ENCODE measurements at regions of chr9 and their contacts with region 1.

Region 1: DNA sequence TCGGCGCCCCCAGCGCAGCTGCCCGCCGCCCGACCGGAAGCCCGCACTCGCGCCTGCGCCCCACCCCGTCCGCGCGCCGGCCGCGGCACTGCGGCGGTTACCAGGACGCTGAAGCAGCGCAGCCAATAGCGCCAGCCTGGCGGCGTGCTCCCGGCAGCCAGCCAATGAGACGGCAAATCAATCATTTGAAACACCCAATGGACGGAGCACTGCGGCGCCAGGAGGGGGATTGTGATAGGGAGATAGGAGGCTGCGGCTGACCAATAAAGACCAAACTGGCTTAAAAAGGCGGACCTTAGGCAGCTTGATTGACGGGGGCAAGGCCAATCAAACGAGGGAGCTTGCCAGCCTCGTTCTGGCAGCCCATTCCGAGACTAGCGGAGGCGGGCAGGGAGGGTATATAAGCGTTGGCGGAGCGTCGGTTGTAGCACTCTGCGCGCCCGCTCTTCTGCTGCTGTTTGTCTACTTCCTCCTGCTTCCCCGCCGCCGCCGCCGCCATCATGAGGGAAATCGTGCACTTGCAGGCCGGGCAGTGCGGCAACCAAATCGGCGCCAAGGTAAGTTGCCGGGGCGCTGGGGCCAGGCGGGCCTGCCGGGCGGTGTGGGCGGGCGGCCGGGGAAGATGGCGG is at the start of gene TUBB4B:
- DNase-seq: peak; percentile 98 to 100
- H3K4me3 ChIP-seq: peak within 1 kb of the TSS; percentile 97
- H3K27ac ChIP-seq: peak within 1 kb of the TSS; percentile 82
- H3K4me1 ChIP-seq: peaks cover 39% of the 10 kb centered on the region
- H3K27me3 ChIP-seq: no peaks in the 10 kb centered on the region
- CTCF ChIP-seq: no peak
- total RNA-seq, gene TUBB4B: 441 and 494 TPM in 2 replicates

Region 2: DNA sequence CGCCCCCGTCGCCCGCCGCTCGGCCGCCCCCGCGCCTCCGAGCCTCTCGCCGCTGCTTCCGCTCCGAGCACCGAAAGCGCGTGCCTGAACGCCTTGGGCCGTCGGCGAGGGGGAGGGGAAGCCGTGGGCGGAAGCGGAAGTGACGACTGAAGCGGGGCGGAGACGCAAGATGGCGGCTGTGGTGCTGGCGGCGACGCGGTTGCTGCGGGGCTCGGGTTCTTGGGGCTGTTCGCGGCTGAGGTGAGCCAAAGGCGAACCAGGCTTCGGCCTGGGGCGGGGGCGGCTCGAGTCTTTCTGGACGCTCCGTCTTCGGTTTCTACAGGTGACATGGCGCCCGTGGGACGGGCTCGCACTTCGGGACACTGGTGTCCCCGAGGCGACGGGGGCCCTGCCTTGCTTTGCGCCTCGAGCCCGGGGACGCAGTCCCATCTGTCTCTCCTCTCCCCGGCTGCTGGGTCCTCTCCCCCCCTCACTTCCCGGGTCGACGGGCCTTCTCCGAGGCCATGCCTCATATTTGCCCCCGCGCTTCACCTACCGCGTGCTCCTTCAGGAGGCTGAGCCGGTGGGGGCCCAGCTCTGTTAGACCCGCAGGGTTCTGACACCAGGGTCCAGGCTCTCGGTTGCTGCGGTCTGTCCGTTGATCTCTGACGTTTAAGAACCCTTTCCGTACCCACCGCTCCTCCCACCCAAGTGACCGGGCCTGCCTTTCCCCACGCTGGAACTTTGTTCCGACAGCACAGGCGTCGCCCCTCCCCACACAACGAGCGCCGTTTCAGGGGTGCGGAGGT is 830.3 kb before region 1 on chr9 and contains the starts of genes ENTR1 and PMPCA:
- CTCF ChIA-PET with region 1: no interaction called
- POLR2A ChIA-PET with region 1: no interaction called
- intact Hi-C with region 1: no loop called
- DNase-seq: peak; percentile 77 to 92
- H3K4me3 ChIP-seq: peak within 1 kb of the TSS; percentile 94
- H3K27ac ChIP-seq: peak within 1 kb of the TSS; percentile 51; the same call in 1 of the 2 replicates
- H3K4me1 ChIP-seq: peaks cover 17% of the 10 kb centered on the region; the same call in 1 of the 2 replicates
- H3K27me3 ChIP-seq: no peaks in the 10 kb centered on the region
- CTCF ChIP-seq: no peak
- total RNA-seq, gene ENTR1: 67.9 and 82.9 TPM in 2 replicates
- total RNA-seq, gene PMPCA: 78.1 and 86.5 TPM in 2 replicates

Region 3: DNA sequence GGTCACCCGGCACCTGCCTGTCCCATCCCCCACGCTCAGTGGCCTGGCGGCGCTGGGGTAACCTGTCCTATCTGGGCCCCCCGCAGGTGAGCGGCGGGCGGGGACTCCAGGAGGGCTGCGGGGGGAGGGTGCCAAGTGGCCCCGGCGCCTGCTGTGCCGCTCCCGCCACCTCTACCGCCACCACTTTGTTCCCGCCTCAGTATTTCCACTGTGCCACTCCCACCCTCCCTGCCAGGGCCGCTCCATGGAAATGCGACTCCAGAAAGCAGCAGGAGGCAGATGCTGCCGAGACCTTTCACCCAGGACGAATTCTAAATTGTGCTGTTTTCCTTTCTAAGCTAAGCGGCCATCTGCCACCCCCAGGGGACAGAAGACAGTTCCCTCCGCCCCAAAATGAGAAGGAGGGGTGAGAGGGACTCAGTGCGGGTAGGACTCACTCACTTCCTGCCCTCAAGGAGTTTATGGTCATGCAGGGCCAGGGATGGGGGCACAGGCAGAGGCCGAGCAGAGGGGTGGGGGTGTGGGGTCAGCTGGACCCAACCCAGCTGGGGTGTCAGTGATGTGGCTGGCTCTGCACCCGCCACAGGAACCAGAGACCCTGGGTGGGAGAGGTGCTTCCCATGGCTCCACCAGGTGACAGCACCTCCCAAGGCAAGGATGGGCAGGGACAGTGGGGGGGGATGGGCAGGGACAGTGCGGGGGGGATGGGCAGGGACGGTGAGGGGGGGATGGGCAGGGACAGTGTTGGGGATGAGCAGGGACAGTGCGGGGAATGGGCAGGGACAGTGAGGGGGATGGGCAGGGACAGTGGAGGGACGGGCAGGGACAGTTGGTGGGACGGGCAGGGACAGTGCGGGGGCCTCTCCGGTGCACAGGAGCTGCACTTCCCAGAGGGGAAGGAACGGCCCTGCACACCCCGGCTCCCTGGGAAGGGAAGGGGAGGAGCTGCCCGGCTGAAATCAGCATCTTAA is 713.0 kb before region 1 on chr9:
- CTCF ChIA-PET with region 1: no interaction called
- POLR2A ChIA-PET with region 1: no interaction called
- intact Hi-C with region 1: no loop called
- DNase-seq: no peak
- H3K4me3 ChIP-seq: no peak overlapping the region
- H3K27ac ChIP-seq: no peak overlapping the region
- H3K4me1 ChIP-seq: no peaks in the 10 kb centered on the region
- H3K27me3 ChIP-seq: no peaks in the 10 kb centered on the region
- CTCF ChIP-seq: no peak

Region 4: DNA sequence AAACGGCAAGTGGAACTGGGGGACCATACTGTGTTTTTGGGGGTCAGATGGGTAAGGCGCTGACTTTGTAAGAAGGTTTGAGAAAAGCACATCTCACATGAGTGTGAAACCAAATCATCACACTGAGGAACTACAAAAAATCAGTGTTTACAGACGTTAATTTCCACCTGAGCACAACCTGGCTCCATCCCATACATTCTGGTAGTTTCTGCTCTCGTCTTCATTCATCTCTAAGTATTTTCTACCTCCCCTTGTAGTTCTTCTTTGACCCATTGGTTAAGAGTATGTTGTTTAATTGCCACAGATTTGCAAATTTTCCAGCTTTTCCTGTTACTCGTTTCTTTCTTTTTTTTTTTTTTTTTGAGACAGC is 117.5 kb before region 1 on chr9:
- CTCF ChIA-PET with region 1: interaction called, 13 read pairs
- POLR2A ChIA-PET with region 1: no interaction called
- intact Hi-C with region 1: no loop called
- DNase-seq: no peak
- H3K4me3 ChIP-seq: no peak overlapping the region
- H3K27ac ChIP-seq: no peak overlapping the region
- H3K4me1 ChIP-seq: peaks cover 19% of the 10 kb centered on the region
- H3K27me3 ChIP-seq: no peaks in the 10 kb centered on the region
- CTCF ChIP-seq: no peak

Region 5: GRCh38 chr9:137254624-137255447 is 13.9 kb after region 1 on chr9 and contains the start of gene NELFB:
- CTCF ChIA-PET with region 1: interaction called, 13 read pairs
- POLR2A ChIA-PET with region 1: interaction called, 19 read pairs
- intact Hi-C with region 1: no loop called
- DNase-seq: peak; percentile 64 to 98
- H3K4me3 ChIP-seq: peak within 1 kb of the TSS; percentile 92
- H3K27ac ChIP-seq: 0 out of 2 replicates have a peak within 1 kb of the TSS, but pooled peaks have one; percentile 37
- H3K4me1 ChIP-seq: peaks cover 22% of the 10 kb centered on the region
- H3K27me3 ChIP-seq: no peaks in the 10 kb centered on the region
- CTCF ChIP-seq: no peak
- total RNA-seq, gene NELFB: 94.2 and 103 TPM in 2 replicates

Region 6: DNA sequence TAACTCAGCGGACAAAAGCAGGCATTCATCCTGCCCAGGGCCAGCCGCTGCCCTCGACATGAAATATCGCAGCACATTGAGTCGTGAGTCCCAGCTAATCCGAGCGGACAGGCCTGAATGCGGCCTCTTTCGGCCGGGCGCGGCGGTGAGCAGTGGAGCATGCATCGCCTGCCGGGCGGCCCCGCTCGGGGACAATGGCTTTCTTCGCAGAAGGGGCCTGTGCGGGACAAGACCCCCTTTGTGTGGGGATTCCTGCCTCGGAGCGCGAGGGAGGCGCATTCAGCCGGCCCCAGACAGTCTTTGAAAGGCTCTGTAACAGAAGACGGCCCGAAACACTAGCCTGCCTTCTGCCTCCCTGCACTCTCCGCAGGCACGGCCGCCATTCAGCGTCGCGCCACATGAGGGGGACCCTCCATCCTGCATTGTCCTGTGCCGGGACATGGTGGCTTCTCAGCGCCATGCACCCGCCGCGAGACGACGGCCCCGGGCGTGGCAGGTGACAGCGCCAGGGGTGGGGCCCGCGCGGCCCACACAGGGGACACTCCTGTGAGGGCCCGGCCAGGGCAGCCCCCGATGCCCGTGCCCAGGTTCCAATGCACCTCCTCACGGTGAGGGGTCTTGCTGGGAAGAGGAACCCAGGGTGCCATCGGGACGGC is 130.0 kb after region 1 on chr9:
- CTCF ChIA-PET with region 1: no interaction called
- POLR2A ChIA-PET with region 1: no interaction called
- intact Hi-C with region 1: no loop called
- DNase-seq: no peak
- H3K4me3 ChIP-seq: no peak overlapping the region
- H3K27ac ChIP-seq: no peak overlapping the region
- H3K4me1 ChIP-seq: no peaks in the 10 kb centered on the region
- H3K27me3 ChIP-seq: no peaks in the 10 kb centered on the region
- CTCF ChIP-seq: no peak

Region 7: DNA sequence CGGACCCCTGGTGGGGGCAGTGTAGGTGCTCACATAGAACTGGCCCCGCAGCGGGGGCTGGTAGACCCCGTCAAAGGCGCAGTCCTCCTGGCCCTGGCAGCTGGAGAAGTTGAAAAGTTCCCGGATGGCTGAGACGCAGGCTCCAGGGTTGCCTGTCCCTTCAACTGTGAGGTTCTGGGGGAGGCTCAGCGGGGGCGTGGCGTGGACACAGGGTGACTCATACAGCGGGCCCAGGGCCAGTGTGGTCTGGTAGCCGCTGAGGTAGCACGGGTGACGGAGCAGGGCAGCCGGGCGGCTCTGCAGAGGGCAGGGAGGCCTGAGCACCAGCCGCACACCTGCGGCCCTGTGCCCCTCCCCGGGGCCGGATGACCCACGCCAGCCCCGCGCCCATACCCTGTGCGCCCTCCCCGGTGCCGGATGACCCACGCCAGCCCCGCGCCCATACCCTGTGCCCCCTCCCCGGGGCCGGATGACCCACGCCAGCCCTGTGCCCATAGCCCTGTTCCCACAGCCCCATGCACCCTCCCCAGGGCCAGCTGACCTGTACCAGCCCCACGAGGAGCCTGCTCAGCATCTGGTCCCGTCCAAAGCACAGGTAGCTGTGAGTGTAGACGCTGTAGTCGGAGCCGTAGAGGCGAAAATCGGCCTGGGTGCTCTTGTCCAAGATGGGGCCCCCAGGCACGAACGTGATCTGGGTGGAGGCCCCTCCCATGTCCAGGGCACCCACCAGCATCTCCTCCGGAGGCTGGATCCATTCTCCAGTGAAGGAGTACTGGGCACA is 195.2 kb after region 1 on chr9:
- CTCF ChIA-PET with region 1: no interaction called
- POLR2A ChIA-PET with region 1: interaction called, 19 read pairs
- intact Hi-C with region 1: no loop called
- DNase-seq: peak; percentile 86 to 97
- H3K4me3 ChIP-seq: no peak overlapping the region
- H3K27ac ChIP-seq: no peak overlapping the region
- H3K4me1 ChIP-seq: peaks cover 17% of the 10 kb centered on the region
- H3K27me3 ChIP-seq: no peaks in the 10 kb centered on the region
- CTCF ChIP-seq: no peak

Measured in PC-9 (cell line).